CD8-positive, alpha-beta T cell (primary cell): ENCODE measurements at regions of chr5 and their contacts with region 1.

Region 1: GRCh38 chr5:73950441-73950873 is 324.5 kb downstream of the ARHGEF28 start:
- DNase-seq: no peak
- ATAC-seq: no peak
- H3K4me3 ChIP-seq: no peak overlapping the region
- H3K4me3 Mint-ChIP-seq: no peak overlapping the region
- H3K27ac ChIP-seq: no peak overlapping the region
- H3K27ac Mint-ChIP-seq: no peak overlapping the region
- H3K4me1 ChIP-seq: no peaks in the 10 kb centered on the region
- H3K4me1 Mint-ChIP-seq: no peaks in the 10 kb centered on the region
- H3K27me3 ChIP-seq: no peaks in the 10 kb centered on the region
- H3K27me3 Mint-ChIP-seq: no peaks in the 10 kb centered on the region
- CTCF ChIP-seq: no peak

Region 2: GRCh38 chr5:75847561-75848021 is 1897.1 kb after region 1 on chr5:
- CTCF ChIA-PET with region 1: no interaction called
- POLR2A ChIA-PET with region 1: no interaction called
- intact Hi-C with region 1: loop called in 1 of 2 experiments (anchors 10 kb)
- DNase-seq: no peak
- ATAC-seq: no peak
- H3K4me3 ChIP-seq: no peak overlapping the region
- H3K4me3 Mint-ChIP-seq: no peak overlapping the region
- H3K27ac ChIP-seq: no peak overlapping the region
- H3K27ac Mint-ChIP-seq: no peak overlapping the region
- H3K4me1 ChIP-seq: no peaks in the 10 kb centered on the region
- H3K4me1 Mint-ChIP-seq: no peaks in the 10 kb centered on the region
- H3K27me3 ChIP-seq: no peaks in the 10 kb centered on the region
- H3K27me3 Mint-ChIP-seq: peaks cover 19% of the 10 kb centered on the region
- CTCF ChIP-seq: no peak